B cell (primary cell): ENCODE measurements at regions of chr16 and their contacts with region 1.

Region 1: GRCh38 chr16:15888072-15888976 is at the start of gene CEP20:
- DNase-seq: peak; percentile 100
- ATAC-seq: peak; percentile 98
- H3K4me3 ChIP-seq: peak within 1 kb of the TSS; percentile 66 to 99 (median 96)
- H3K4me3 Mint-ChIP-seq: peak within 1 kb of the TSS; percentile 95
- H3K27ac ChIP-seq: peak within 1 kb of the TSS; percentile 64 to 76
- H3K27ac Mint-ChIP-seq: peak within 1 kb of the TSS; percentile 95
- H3K4me1 ChIP-seq: peaks cover 14 to 16% of the 10 kb centered on the region in 2 donors
- H3K4me1 Mint-ChIP-seq: peaks cover 31% of the 10 kb centered on the region
- H3K27me3 ChIP-seq: no peaks in the 10 kb centered on the region
- H3K27me3 Mint-ChIP-seq: no peaks in the 10 kb centered on the region
- CTCF ChIP-seq: no peak
- total RNA-seq, gene CEP20: 29.3 and 30.2 TPM in 2 replicates

Region 2: GRCh38 chr16:15732416-15732815 is 155.9 kb before region 1 on chr16:
- CTCF ChIA-PET with region 1: no interaction called
- POLR2A ChIA-PET with region 1: no interaction called
- intact Hi-C with region 1: no loop called
- DNase-seq: no peak
- ATAC-seq: no peak
- H3K4me3 ChIP-seq: no peak overlapping the region
- H3K4me3 Mint-ChIP-seq: no peak overlapping the region
- H3K27ac ChIP-seq: no peak overlapping the region
- H3K27ac Mint-ChIP-seq: no peak overlapping the region
- H3K4me1 ChIP-seq: no peaks in the 10 kb centered on the region
- H3K4me1 Mint-ChIP-seq: no peaks in the 10 kb centered on the region
- H3K27me3 ChIP-seq: no peaks in the 10 kb centered on the region
- H3K27me3 Mint-ChIP-seq: no peaks in the 10 kb centered on the region
- CTCF ChIP-seq: no peak

Region 3: DNA sequence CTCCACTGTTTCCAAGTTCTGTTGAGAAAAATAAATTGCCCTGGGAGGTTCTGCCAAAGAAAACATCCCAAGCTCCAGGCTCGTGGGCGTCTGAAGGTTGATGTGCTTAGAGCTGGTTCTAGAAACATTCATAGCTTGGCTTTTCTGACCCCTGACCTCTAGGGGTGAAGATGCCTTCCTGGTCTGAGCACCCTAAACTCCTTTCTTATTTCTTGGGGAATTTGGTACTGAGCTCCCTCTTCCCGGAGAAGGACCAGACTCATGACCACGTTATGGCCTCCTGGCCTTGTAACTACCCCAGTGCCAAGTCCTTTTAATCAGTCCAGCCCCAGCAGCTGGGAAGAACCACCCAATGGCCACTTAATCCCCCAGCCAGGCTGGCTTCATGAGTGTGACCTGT is 97.9 kb before region 1 on chr16:
- CTCF ChIA-PET with region 1: no interaction called
- POLR2A ChIA-PET with region 1: no interaction called
- intact Hi-C with region 1: no loop called
- DNase-seq: no peak
- ATAC-seq: no peak
- H3K4me3 ChIP-seq: no peak overlapping the region
- H3K4me3 Mint-ChIP-seq: no peak overlapping the region
- H3K27ac ChIP-seq: no peak overlapping the region
- H3K27ac Mint-ChIP-seq: no peak overlapping the region
- H3K4me1 ChIP-seq: no peaks in the 10 kb centered on the region
- H3K4me1 Mint-ChIP-seq: peaks cover 4% of the 10 kb centered on the region
- H3K27me3 ChIP-seq: no peaks in the 10 kb centered on the region
- H3K27me3 Mint-ChIP-seq: no peaks in the 10 kb centered on the region
- CTCF ChIP-seq: no peak

Region 4: DNA sequence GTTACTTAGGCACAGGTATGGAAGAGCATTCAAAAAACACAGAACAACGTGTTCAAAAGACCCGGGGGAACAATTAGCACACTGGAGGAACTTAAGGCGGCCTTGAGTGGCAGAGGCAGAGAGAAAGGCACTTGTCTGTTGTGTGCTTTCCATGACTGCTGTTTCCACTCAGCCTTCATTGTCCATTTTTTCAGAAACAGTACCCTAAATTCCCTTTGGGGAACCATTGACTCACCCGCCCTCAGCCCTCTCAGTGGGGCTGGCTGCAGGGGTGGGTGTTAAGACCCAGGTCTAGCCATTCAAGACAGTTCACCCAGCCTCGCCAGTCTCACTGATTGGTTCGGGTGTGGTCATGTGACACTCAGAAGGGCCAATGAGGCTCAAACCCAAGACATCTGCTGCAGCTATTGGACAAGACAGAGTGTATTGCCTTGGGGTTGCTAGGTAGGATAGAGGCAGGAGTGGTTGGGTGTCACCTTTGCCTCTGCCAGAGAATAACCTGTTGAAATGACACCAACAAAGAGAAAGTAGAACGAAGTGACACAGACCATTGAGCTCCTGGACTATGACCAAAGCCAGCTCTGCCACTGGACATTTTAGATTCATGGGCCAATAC is 19.6 kb after region 1 on chr16:
- CTCF ChIA-PET with region 1: no interaction called
- POLR2A ChIA-PET with region 1: interaction called, 4 read pairs
- intact Hi-C with region 1: loop called (anchors 1 kb)
- DNase-seq: peak; percentile 77
- ATAC-seq: peak; percentile 98
- H3K4me3 ChIP-seq: no peak overlapping the region
- H3K4me3 Mint-ChIP-seq: peak overlapping the region; percentile 23
- H3K27ac ChIP-seq: peak overlapping the region in 1 of 2 donors; percentile 2
- H3K27ac Mint-ChIP-seq: no peak overlapping the region
- H3K4me1 ChIP-seq: peaks cover 0 to 3% of the 10 kb centered on the region in 2 donors
- H3K4me1 Mint-ChIP-seq: peaks cover 9% of the 10 kb centered on the region
- H3K27me3 ChIP-seq: no peaks in the 10 kb centered on the region
- H3K27me3 Mint-ChIP-seq: no peaks in the 10 kb centered on the region
- CTCF ChIP-seq: no peak